Heart left ventricle (tissue), 16 donors: ENCODE measurements at regions of chr1 and their contacts with region 1.

Region 1: GRCh38 chr1:163807061-163808049 is 485.6 kb downstream of the NUF2 start:
- DNase-seq: no peak
- ATAC-seq: no peak
- H3K4me3 ChIP-seq: no peak overlapping the region
- H3K27ac ChIP-seq: no peak overlapping the region
- H3K4me1 ChIP-seq: no peaks in the 10 kb centered on the region
- H3K27me3 ChIP-seq: no peaks in the 10 kb centered on the region
- CTCF ChIP-seq: no peak
- POLR2A ChIP-seq: no peak

Region 2: DNA sequence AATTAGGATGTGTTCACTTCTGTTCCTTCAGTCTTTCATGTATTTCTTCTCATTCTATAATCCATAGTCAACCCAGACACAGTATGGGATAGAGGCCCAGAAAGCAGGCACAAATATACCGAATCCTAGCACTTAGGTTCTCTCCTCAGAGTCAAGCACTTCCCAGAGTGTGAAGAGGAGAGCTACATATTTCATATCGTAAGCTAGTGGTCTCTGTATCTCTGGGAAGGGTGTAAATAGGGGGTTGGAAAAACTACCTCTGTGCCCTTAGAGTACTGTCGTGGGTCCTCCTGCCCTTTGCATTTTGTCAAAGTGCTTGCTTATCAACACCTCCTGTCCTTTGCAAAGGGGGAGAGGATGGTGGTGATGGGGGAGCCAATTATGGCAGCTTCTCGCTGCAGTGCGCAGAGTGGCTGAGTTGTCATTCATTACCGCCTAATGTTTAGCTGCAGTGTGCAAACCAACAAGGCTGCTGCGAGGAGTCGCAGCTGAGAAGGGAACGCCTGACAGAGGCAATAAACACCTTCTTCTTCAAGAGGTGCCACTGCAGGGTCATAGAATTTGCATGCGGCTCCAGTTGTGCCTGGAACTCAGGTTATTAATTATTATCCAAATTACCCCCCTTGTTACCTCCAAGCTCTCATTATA is 302.9 kb before region 1 on chr1:
- intact Hi-C with region 1: no loop called
- DNase-seq: no peak
- ATAC-seq: no peak
- H3K4me3 ChIP-seq: no peak overlapping the region
- H3K27ac ChIP-seq: no peak overlapping the region
- H3K4me1 ChIP-seq: no peaks in the 10 kb centered on the region
- H3K27me3 ChIP-seq: no peaks in the 10 kb centered on the region
- CTCF ChIP-seq: no peak
- POLR2A ChIP-seq: no peak

Region 3: GRCh38 chr1:163561580-163562295 is 245.6 kb before region 1 on chr1:
- intact Hi-C with region 1: loop called in 1 of 10 experiments (anchors 10 kb)
- DNase-seq: no peak
- ATAC-seq: peak in 2 of 4 donors; percentile 47 to 63
- H3K4me3 ChIP-seq: no peak overlapping the region
- H3K27ac ChIP-seq: no peak overlapping the region
- H3K4me1 ChIP-seq: no peaks in the 10 kb centered on the region
- H3K27me3 ChIP-seq: no peaks in the 10 kb centered on the region
- CTCF ChIP-seq: peak in 11 of 12 donors; percentile 23 to 64 (median 46)
- POLR2A ChIP-seq: no peak